ENCODE measurements at regions of chr5 and their contacts with region 1.

Region 1: DNA sequence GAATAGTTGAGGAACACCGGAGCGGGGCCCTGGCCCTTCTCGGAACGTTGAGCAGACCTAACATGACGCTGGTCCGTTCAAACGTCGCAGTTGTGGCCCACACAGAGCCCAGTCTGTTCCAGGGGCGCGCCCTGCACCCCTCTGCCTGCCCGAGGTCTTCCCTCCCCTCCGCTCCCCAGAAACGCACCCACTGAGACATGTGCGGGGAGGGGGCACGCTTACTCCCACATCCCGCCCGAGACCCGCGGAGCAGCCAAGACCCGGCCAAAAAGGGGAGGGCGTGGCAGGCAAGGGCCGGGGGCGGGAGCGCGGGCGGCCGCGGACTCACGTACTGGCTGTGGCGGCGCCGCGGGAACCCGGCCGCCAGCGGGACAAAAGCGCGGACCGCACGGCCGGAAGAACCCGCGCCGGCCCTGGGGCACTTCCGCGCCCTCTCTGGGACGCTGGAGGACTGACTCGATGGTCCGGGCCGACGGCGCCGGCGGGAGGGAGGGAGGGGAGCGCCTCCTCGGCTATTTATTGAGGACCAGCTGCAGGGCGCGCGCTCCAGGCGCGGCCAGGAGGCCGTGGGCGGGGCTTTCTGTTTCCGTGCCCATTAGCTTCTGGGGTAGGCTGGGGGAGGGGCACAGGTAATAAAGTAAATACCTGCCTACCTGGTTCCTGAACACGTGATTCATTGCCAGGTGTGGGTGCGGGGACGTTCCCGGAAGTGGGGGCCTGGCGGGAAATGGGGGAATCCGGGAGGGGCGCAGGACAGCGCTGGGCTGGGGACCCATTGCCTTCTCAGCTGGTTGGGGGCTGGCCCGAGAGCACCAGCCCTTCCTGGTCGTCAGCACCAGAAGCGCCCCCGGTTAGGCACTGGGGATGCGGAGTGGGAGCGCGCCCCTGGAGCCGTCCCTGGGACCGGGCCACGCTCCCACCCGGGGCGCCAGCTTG is at the start of gene ZFP62:
- DNase-seq: peak; percentile 90
- ATAC-seq: peak; percentile 83
- H3K4me3 Mint-ChIP-seq: peak within 1 kb of the TSS; percentile 95
- H3K27ac Mint-ChIP-seq: peak within 1 kb of the TSS; percentile 95
- H3K4me1 Mint-ChIP-seq: peaks cover 14% of the 10 kb centered on the region
- H3K27me3 Mint-ChIP-seq: peaks cover 2% of the 10 kb centered on the region
- total RNA-seq, gene ZFP62: 42.3 to 42.7 TPM

Region 2: DNA sequence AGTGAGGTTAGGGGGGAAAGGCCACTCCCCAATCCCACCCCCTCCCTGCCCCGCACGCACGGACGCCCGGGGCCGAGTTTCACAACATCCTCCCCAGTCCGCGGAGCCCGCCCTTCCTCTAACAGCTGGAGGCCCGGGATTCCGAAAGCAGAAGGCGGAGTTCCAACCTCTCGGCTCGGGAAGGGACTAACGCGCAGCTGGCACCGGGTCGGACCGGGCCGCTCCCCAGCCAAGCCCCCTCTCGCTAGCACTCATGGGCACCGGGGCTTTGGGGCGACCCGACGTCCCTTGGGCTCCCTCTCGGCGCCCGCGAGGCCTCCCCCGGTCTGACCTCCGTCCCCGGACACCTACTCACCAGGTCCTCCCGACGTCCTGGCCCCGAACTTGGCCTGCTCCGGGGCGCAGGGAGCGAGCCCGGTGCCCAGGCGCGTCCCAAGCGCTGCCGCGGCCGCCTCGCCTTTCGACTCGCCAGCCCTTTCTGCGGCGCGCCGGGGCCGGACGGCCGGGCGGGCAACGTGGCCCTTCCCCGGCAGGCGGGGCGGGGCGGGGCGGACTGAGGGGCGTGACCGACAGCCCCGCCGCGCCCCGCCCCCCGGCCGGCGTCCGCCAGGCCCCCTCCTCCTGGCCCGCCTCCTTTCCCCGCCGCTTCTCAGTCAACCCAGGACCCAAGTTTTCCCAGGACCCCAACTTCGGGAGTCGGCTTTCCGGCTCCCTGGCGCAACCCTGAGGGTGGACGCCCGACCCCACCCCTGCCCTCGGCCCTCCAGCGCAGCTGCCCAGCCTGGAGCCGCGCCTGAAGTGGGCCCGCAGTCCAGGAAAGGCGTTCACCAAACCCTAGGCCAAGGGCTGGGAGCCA is 58.6 kb before region 1 on chr5 and contains the start of gene MGAT1:
- POLR2A ChIA-PET with region 1: interaction called, 33 read pairs
- DNase-seq: peak; percentile 91
- ATAC-seq: peak; percentile 29
- H3K4me3 Mint-ChIP-seq: peak within 1 kb of the TSS; percentile 93
- H3K27ac Mint-ChIP-seq: peak within 1 kb of the TSS; percentile 86
- H3K4me1 Mint-ChIP-seq: peaks cover 63% of the 10 kb centered on the region
- H3K27me3 Mint-ChIP-seq: no peaks in the 10 kb centered on the region
- total RNA-seq, gene MGAT1: 177 to 186 TPM

Region 3: GRCh38 chr5:180810210-180810958 is 50.8 kb before region 1 on chr5:
- POLR2A ChIA-PET with region 1: interaction called, 33 read pairs
- DNase-seq: peak; percentile 96
- ATAC-seq: peak; percentile 74
- H3K4me3 Mint-ChIP-seq: peak overlapping the region; percentile 88
- H3K27ac Mint-ChIP-seq: peak overlapping the region; percentile 100
- H3K4me1 Mint-ChIP-seq: peaks cover 57% of the 10 kb centered on the region
- H3K27me3 Mint-ChIP-seq: no peaks in the 10 kb centered on the region

Region 4: GRCh38 chr5:180898621-180899246 is 37.6 kb after region 1 on chr5 and contains the start of gene BTNL8:
- POLR2A ChIA-PET with region 1: no interaction called
- DNase-seq: no peak
- ATAC-seq: no peak
- H3K4me3 Mint-ChIP-seq: no peak within 1 kb of the TSS
- H3K27ac Mint-ChIP-seq: no peak within 1 kb of the TSS
- H3K4me1 Mint-ChIP-seq: no peaks in the 10 kb centered on the region
- H3K27me3 Mint-ChIP-seq: no peaks in the 10 kb centered on the region
- total RNA-seq, gene BTNL8: not detected

Region 5: DNA sequence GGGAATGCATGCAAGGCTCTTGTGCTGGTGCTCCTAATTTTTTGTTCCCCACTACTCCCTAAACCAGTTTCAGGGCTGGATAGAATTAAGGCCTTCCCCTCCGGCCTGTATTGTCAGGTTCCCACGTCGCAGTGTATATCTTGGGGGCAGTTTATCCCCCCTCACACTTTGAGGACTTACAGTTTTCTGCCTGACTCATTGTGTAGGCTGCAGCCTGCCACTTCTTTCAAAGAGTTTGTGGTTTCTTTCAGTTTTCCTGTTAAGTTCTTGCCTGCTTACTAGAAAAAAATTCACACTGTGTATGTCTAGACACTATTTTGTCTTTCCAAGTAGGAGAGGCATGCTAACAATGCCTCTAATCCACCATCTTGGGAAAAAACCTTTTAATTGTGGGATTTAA is 99.1 kb after region 1 on chr5:
- POLR2A ChIA-PET with region 1: no interaction called
- DNase-seq: no peak
- ATAC-seq: peak; percentile 58
- H3K4me3 Mint-ChIP-seq: peak overlapping the region; percentile 5
- H3K27ac Mint-ChIP-seq: no peak overlapping the region
- H3K4me1 Mint-ChIP-seq: peaks cover 8% of the 10 kb centered on the region
- H3K27me3 Mint-ChIP-seq: peaks cover 7% of the 10 kb centered on the region

Region 6: GRCh38 chr5:181243512-181244343 is 382.6 kb after region 1 on chr5 and contains the start of gene RACK1:
- POLR2A ChIA-PET with region 1: no interaction called
- DNase-seq: peak; percentile 84
- ATAC-seq: peak; percentile 68
- H3K4me3 Mint-ChIP-seq: peak within 1 kb of the TSS; percentile 95
- H3K27ac Mint-ChIP-seq: peak within 1 kb of the TSS; percentile 92
- H3K4me1 Mint-ChIP-seq: peaks cover 39% of the 10 kb centered on the region
- H3K27me3 Mint-ChIP-seq: no peaks in the 10 kb centered on the region
- total RNA-seq, gene RACK1: 1,741 to 1,808 TPM

Measured in activated naive CD8-positive, alpha-beta T cell treated with anti-CD3 and anti-CD28 coated beads, Interleukin-2, amount 10 ng/mL, durations not matched to agents 7 days and 5 days (primary cell).